Dendritic cell treated with granulocyte-macrophage colony-stimulating factor and Interleukin-4, amounts not matched to agents 40 ng/mL and 50 ng/mL, for 4 days (primary cell): ENCODE measurements at regions of chr6 and their contacts with region 1.

Region 1: DNA sequence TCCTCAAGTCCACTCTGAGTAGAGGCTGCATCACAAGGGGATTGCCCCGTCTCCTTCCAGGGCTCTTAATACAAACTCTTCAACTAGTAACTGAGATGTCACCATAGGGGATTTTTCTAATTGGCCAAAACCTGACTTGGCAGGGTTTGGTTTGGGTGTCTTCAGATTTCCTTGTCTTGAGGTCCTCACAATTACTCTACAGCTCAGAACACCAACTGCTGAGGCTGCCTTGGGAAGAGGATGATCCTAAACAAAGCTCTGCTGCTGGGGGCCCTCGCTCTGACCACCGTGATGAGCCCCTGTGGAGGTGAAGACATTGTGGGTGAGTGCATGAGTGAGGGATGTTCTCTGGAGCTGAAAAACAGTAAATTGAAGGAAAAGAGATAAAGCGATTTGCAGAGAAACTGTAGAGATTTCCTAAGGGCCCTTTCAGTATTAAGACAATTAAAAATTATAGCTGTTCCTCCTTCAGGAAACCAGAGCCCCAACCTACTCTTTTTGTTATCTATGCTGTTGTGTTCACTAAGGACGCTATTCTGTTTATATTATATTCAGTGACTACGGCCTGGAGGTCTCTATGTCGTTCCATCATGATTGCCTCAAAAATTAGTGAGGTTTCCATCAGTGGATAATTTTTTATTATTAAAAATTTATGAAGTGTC is at the start of gene HLA-DQA1:
- H3K4me3 Mint-ChIP-seq: peak within 1 kb of the TSS; percentile 99
- H3K27ac Mint-ChIP-seq: peak within 1 kb of the TSS; percentile 99
- H3K4me1 Mint-ChIP-seq: peaks cover 67% of the 10 kb centered on the region
- H3K27me3 Mint-ChIP-seq: no peaks in the 10 kb centered on the region

Region 2: DNA sequence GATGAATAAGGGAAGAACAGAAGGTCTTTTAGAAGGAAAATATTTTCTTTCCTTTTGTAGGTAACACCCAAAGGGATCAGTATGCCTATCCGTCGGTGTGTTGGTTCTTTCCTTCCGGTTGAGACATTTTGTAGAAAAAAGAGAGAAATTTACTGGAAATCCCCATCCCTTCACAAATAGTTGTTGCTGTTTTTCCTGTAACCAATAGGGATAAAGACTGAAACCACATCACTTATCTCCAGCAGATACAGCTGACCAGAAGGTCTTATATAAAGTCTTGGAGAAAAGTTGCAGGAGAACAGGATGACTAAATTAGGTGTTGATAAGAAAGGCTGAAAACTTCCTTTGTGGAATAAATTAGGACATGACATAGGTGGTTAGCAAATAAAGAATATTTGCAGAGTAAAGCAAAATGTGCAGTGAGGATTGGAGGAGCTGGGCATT is 32.9 kb before region 1 on chr6:
- intact Hi-C with region 1: loop called (anchors 1 kb)
- H3K4me3 Mint-ChIP-seq: peak overlapping the region; percentile 57
- H3K27ac Mint-ChIP-seq: no peak overlapping the region
- H3K4me1 Mint-ChIP-seq: peaks cover 59% of the 10 kb centered on the region
- H3K27me3 Mint-ChIP-seq: no peaks in the 10 kb centered on the region

Region 3: DNA sequence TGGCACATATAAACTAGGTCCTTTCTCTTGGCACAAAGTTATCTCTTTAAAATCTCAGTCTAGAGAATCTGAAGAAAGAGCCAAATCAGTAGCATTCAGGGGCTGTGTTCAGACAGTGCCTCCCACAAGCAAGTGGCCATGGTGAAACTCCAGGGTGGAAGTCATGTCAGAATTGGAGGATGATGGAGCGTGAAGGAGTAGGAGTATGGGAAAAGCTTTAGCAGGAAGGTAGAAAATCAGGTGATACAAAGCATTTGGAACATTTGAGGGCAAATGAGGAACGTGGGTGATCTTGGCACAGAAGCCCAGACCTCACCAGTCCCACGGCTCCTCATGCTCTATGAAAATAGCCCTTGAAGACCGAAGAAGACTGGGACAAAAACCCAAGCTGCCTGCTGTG is 31.9 kb after region 1 on chr6:
- intact Hi-C with region 1: no loop called
- H3K4me3 Mint-ChIP-seq: no peak overlapping the region
- H3K27ac Mint-ChIP-seq: peak overlapping the region; percentile 100
- H3K4me1 Mint-ChIP-seq: peaks cover 46% of the 10 kb centered on the region
- H3K27me3 Mint-ChIP-seq: no peaks in the 10 kb centered on the region